Esophagus muscularis mucosa (tissue), 4 donors: ENCODE measurements at regions of chr2 and their contacts with region 1.

Region 1: DNA sequence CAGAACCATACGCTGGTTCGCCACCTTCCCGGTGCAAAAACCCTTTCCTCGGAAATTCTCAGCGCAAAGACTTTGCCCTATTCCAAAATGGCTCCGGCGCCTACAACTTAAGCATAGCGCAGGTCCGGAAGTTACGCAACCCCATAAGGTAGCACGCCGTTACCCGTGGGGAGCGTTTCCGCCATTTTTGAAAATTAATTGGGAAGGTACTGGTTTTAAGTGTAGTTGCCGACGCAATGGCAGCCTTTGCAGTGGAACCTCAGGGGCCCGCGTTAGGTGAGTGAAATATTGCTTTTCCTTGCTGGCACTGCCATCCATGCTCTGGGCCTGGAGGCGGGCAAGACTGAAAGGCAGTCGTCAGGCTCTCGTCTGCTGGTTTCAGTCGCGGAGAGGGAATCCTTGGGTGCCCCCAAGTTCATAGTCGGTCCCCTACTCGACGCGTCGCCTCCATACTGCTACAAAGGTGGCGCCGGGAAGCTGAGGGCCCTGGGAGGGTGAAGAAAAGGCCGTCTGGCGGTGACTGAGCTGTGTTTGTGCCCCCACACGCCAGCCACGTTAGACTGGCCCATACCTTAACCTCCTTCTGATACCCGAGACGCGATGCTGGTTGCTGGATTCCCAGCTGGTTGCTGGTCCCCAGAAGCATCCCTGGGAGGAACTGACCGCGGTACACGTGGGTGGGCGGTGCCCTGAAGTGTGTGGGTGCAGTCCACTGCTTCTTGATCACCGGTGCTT is at the start of gene NUP35:
- DNase-seq: peak; percentile 96
- H3K4me3 ChIP-seq: peak within 1 kb of the TSS; percentile 76 to 93 (median 84)
- H3K27ac ChIP-seq: peak within 1 kb of the TSS; percentile 86 to 91 (median 88)
- H3K4me1 ChIP-seq: peaks cover 5 to 21% (median 14%) of the 10 kb centered on the region in 4 donors
- H3K27me3 ChIP-seq: no peaks in the 10 kb centered on the region
- CTCF ChIP-seq: no peak
- EP300 ChIP-seq: no peak
- POLR2A ChIP-seq: no peak
- total RNA-seq, gene NUP35: 7.6 to 11.6 (median 10.7) TPM

Region 2: GRCh38 chr2:182763311-182763912 is 361.0 kb before region 1 on chr2:
- intact Hi-C with region 1: loop called (anchors 10 kb)
- DNase-seq: no peak
- H3K4me3 ChIP-seq: no peak overlapping the region
- H3K27ac ChIP-seq: peak overlapping the region in 2 of 4 donors; percentile 56 to 65
- H3K4me1 ChIP-seq: peaks cover 0 to 24% (median 22%) of the 10 kb centered on the region in 4 donors
- H3K27me3 ChIP-seq: no peaks in the 10 kb centered on the region
- CTCF ChIP-seq: peak; percentile 51 to 77 (median 52)
- EP300 ChIP-seq: no peak
- POLR2A ChIP-seq: no peak

Region 3: DNA sequence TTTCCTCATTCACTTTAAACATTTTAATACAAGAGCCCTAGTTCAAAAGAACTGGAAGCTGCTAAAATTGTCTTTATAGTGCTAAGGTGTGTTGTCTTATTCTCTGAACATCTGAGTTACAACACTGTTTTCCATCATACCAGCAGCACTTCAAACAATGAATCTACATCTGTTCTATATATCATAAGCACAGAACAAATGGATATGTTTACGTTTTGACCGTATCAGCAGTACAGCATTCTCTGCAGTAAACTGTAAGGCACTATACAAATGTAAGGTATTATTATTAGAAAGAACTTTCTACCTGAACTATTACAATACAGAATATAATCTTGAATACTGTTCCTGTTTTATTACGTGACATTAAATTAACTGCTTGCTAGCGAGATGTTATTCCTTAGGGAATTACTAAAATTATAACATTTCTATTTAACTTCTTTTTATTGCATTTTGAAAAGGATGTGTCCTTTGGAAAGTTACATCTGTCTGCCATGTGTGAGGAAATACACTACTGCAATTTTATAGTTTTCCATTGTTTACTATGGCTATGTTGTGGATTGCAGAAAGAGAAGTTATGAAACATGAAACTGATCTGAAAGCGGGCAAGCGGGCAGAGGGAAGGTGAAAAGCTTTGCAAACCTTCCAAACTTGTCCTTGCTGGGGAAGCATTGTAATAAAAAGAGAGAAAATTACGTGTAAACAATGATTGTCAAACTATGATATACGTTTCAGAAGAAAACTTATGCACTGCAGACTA is 99.9 kb before region 1 on chr2:
- intact Hi-C with region 1: no loop called
- DNase-seq: no peak
- H3K4me3 ChIP-seq: no peak overlapping the region
- H3K27ac ChIP-seq: no peak overlapping the region
- H3K4me1 ChIP-seq: peaks cover 51 to 89% (median 59%) of the 10 kb centered on the region in 4 donors
- H3K27me3 ChIP-seq: no peaks in the 10 kb centered on the region
- CTCF ChIP-seq: no peak
- EP300 ChIP-seq: no peak
- POLR2A ChIP-seq: no peak

Region 4: GRCh38 chr2:183089192-183089851 is 35.1 kb before region 1 on chr2:
- intact Hi-C with region 1: loop called (anchors 5 kb)
- DNase-seq: no peak
- H3K4me3 ChIP-seq: no peak overlapping the region
- H3K27ac ChIP-seq: no peak overlapping the region
- H3K4me1 ChIP-seq: peaks cover 0 to 5% (median 0%) of the 10 kb centered on the region in 4 donors
- H3K27me3 ChIP-seq: no peaks in the 10 kb centered on the region
- CTCF ChIP-seq: no peak
- EP300 ChIP-seq: no peak
- POLR2A ChIP-seq: no peak